Gastrocnemius medialis (tissue), 4 donors: ENCODE measurements at regions of chr4 and their contacts with region 1.

Region 1: DNA sequence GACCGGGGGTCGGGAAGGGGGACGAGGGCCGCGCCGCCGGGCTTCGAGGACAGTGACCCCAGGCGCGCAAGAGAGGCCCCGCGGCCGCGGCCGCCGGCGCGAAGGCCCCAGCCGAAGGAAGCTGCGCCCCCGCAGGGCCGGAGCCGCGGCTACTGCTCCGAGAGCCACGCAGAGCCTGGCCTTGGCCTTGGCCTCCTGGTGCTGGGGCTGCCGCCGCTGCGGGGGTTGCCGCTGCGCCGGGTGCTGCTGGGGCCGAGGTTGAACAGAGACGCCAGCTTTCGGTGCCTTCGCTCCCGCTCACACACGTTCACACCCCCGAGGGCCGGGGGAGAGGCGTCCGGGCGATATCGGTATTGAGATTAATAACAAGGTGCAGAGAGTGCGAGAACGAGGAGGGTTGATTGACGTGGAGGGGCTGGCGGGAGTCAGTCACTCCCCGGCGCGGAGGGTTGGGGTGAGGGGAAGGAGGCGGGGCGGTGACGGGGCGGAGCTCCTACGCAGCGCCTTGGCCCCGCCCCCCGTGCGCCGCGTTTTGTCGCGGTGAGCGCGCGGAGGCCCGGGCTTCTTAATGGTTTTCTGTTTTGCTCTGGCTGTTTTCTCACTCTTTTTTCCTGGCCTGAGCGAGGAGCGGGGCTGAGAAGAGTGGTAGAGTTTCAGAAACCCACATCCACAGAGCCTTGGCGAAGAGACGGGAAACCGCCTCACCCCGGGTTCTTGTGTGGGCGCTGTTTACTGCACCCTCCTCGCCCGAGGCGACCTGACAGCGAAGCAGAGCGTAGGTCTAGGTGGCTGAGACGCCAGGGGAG is 878 bp upstream of the CNOT6L start:
- DNase-seq: peak; percentile 90 to 92
- ATAC-seq: peak; percentile 81 to 82
- H3K4me3 ChIP-seq: peak overlapping the region; percentile 80 to 97 (median 92)
- H3K27ac ChIP-seq: peak overlapping the region; percentile 91 to 100 (median 98)
- H3K4me1 ChIP-seq: peaks cover 40 to 43% of the 10 kb centered on the region in 2 donors
- H3K27me3 ChIP-seq: no peaks in the 10 kb centered on the region
- CTCF ChIP-seq: peak in 1 of 5 experiments; percentile 23
- POLR2A ChIP-seq: peak; percentile 92 to 96

Region 2: DNA sequence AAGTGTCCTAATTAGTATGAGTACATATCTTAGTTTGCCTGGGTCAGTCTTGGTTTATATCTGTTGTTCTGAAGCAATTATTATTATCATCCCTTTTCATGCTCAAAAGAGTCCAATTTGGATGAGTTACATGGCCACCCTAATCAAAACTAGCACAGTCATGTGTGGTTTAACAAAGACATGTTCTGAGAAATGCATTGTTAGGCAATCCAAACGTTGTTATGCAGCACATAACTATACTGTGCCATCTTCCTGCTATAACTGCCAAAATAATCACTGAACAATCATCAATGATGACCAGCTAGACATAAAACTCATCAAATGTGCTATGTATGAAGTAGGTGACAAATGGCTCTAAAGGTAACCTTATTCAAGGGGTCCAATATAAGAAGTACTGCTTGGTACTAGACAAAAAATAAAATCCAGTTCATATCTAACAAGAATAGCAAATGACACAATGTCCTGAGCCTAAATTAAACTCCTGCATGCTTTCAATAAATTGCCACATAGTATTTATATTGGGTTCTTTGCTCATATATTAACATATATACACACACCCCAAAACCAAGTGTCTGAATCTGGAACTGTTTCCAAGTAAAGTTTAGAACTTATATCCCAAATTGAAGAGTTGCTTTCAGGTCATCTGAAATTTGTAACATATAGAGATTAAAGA is 42.8 kb before region 1 on chr4:
- in situ Hi-C with region 1: no loop called
- intact Hi-C with region 1: loop called (anchors 2 kb)
- DNase-seq: no peak
- ATAC-seq: peak; percentile 71 to 90
- H3K4me3 ChIP-seq: peak overlapping the region in 3 of 4 donors; percentile 1 to 32 (median 4)
- H3K27ac ChIP-seq: peak overlapping the region; percentile 61 to 69 (median 67)
- H3K4me1 ChIP-seq: peaks cover 32 to 37% of the 10 kb centered on the region in 2 donors
- H3K27me3 ChIP-seq: no peaks in the 10 kb centered on the region
- CTCF ChIP-seq: no peak
- POLR2A ChIP-seq: no peak

Region 3: DNA sequence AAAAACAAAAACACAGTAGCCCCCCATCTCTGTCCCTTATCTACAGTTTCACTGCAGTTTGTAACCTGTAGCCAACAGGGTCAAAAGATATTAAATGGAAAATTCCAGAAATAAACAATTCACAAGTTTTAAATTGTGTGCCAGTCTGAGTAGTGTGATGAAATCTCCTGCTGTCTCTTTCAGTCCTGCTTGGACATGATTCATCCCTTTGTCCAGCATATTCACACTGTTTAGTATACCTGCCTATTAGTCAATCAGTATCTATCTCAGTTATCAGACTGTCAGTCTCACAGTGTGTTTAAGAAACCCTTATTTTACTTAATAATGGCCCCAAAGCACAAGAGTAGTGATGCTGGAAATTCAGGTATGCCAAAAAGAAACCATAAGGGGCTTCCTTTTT is 22.8 kb before region 1 on chr4:
- in situ Hi-C with region 1: no loop called
- intact Hi-C with region 1: loop called (anchors 2 kb)
- DNase-seq: no peak
- ATAC-seq: peak; percentile 56 to 70
- H3K4me3 ChIP-seq: no peak overlapping the region
- H3K27ac ChIP-seq: no peak overlapping the region
- H3K4me1 ChIP-seq: peaks cover 47 to 59% of the 10 kb centered on the region in 2 donors
- H3K27me3 ChIP-seq: no peaks in the 10 kb centered on the region
- CTCF ChIP-seq: no peak
- POLR2A ChIP-seq: no peak

Region 4: DNA sequence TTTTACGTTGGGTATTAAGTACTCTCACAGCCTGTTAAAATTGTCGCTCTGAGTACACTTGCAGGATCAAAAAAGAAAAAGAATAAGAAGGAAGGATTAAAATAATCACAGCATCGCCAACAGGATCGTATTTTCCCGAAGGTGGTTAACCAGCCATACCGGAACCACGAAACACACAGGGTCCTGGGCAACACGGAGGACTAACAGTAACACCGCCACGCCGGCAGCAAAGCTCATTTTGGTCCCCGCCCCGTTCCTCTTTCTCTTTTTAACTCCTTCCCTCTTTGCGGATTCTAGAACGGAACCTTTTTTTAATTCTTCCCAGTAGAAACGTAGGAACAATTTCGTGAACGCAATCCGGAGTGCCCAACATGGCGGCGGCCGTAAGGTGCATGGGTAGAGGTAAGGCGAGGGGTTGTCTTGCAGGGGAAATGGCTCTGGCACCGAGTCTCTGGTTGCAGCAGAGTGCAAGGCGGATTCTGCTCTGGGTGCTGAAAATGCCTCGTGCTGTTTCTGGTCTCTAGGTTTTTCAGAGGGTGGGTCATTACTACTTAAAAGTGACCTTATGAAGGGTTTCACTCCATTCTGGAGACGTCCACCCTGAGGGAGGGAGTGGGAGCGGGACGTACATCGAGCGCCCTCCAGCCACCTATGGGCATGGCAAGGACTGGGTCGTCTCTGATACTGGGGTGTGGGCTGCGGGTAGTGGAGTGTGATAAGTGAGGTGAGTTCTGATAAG is 42.6 kb after region 1 on chr4 and contains the start of gene MRPL1:
- in situ Hi-C with region 1: no loop called
- intact Hi-C with region 1: loop called (anchors 1 kb)
- DNase-seq: peak; percentile 85 to 89
- ATAC-seq: peak; percentile 96 to 97
- H3K4me3 ChIP-seq: peak within 1 kb of the TSS; percentile 59 to 86 (median 76)
- H3K27ac ChIP-seq: peak within 1 kb of the TSS; percentile 82 to 94 (median 88)
- H3K4me1 ChIP-seq: peaks cover 11 to 12% of the 10 kb centered on the region in 2 donors
- H3K27me3 ChIP-seq: no peaks in the 10 kb centered on the region
- CTCF ChIP-seq: peak in 2 of 5 experiments; percentile 4 to 38
- POLR2A ChIP-seq: peak; percentile 17 to 65
- total RNA-seq, gene MRPL1: 29.2 to 52.0 (median 31.5) TPM

Region 5: GRCh38 chr4:78022517-78022916 is 202.5 kb after region 1 on chr4:
- in situ Hi-C with region 1: no loop called
- intact Hi-C with region 1: no loop called
- DNase-seq: no peak
- ATAC-seq: no peak
- H3K4me3 ChIP-seq: no peak overlapping the region
- H3K27ac ChIP-seq: no peak overlapping the region
- H3K4me1 ChIP-seq: peaks cover 7 to 10% of the 10 kb centered on the region in 2 donors
- H3K27me3 ChIP-seq: no peaks in the 10 kb centered on the region
- CTCF ChIP-seq: no peak
- POLR2A ChIP-seq: no peak

Region 6: DNA sequence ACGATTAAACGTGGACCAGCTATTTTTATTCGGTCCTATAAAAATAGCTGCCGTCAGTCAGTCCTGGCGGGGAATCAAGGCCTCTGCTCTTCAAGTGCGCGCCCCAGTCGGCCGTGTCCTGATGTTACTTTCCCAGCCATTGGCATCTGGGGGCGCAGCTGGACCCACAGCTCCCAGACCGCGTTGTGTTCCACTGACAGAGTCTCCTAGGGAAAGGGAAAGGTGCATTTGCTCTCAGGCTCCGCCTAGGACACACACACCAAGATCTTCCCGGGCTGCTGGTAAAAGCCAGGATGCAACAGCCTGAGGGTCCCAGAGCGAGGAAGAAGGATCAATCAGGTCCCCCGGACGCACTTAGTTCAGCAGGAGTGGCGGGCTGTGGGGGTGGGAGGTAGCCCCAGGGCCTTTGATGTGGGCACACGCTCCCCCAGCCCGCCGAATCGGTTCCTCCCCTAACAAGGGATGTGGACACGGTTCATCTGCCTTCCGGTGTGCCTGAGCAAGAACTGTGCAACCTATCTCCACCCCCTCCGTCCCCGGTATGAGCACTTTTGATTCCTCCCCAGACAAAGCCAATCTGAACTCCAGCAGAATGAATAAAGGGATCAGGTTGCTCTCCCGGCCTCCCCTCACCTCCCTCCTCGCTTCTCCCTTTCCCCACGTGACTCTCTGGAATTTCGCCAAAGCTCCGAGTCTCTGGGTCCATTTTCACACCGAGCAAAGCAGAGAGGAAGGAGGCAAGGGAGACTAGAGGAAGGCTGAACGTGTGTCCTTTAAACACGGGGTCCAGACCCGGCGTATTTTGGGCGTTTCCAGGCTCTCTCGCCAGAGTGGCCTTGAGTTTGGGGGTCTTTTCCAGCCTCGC is 236.5 kb after region 1 on chr4:
- in situ Hi-C with region 1: no loop called
- intact Hi-C with region 1: loop called (anchors 5 kb)
- DNase-seq: peak; percentile 72 to 83
- ATAC-seq: peak; percentile 73 to 76
- H3K4me3 ChIP-seq: peak overlapping the region; percentile 75 to 84 (median 82)
- H3K27ac ChIP-seq: peak overlapping the region; percentile 84 to 94 (median 92)
- H3K4me1 ChIP-seq: peaks cover 0 to 11% of the 10 kb centered on the region in 2 donors
- H3K27me3 ChIP-seq: no peaks in the 10 kb centered on the region
- CTCF ChIP-seq: peak in 1 of 5 experiments; percentile 15
- POLR2A ChIP-seq: peak; percentile 16 to 35

Region 7: GRCh38 chr4:78581618-78582017 is 761.6 kb after region 1 on chr4:
- in situ Hi-C with region 1: no loop called
- intact Hi-C with region 1: no loop called
- DNase-seq: peak; percentile 10 to 16
- ATAC-seq: no peak
- H3K4me3 ChIP-seq: no peak overlapping the region
- H3K27ac ChIP-seq: no peak overlapping the region
- H3K4me1 ChIP-seq: no peaks in the 10 kb centered on the region
- H3K27me3 ChIP-seq: no peaks in the 10 kb centered on the region
- CTCF ChIP-seq: no peak
- POLR2A ChIP-seq: no peak